ENCODE measurements at regions of chrX and their contacts with region 1.

Region 1: DNA sequence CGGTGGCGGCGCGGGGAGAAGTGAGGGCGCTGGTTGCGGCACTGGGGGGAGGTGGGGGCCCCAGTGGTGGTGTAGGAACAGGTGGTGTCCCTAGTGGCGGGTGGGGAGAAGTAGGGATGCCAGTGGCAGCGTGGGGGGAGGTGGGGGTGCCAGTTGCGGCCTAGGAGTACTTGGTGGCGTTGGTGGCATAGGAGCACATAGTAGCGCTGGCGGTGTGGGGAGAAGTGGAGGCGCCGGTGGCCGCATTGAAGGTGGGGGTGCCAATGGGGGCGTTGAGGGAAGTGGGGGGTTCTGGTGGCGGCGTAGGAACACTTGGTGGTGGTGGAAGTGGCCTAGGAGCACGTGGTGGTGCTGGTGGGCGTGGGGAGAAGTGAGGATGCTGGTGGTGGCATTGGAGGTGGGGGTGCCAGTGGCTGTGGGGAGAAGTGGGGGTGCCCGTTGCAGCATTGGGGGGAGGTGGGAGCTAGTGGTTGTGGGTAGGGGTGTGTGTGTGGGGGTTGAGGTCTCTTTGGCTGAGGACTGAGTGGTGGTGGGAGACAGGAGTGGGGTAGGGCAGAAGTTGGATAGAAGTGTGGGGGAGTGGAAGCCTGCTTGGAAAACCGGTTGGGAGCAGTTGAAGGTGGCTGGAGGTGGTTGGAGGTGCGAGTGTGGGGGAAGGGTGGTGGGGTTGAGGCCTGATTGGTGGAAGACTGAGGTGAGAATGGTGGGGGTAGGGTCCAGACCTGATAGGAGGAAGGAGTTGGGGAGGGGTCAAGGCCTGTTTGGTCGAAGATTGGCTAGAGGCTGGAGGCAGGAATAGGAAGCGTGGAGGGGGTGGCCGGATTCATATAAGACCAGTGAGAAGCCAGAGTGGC is 1.1 kb downstream of the GCNA start:
- DNase-seq: no peak
- ATAC-seq: no peak
- H3K4me3 ChIP-seq: no peak overlapping the region
- H3K27ac ChIP-seq: no peak overlapping the region
- H3K4me1 ChIP-seq: no peaks in the 10 kb centered on the region
- H3K27me3 ChIP-seq: no peaks in the 10 kb centered on the region
- CTCF ChIP-seq: no peak

Region 2: DNA sequence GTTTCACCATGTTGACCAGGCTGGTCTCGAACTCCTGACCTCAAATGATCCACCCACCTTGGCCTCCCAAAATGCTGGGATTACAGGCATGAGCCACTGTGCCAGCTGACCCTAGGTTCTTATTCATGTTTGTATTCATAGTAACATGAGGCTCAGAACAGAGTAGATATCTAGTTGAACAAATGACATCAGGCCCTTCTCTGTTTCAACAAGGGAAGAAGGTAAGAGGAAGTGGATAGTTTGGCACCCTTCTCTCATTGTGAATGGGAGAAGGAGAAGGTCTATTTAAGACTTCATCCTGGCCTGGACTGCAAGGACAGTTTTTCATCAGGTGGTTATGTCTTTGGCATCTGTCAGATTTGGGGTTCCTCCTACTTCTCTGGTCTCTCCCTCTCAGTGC is 342.5 kb before region 1 on chrX:
- intact Hi-C with region 1: no loop called
- DNase-seq: no peak
- ATAC-seq: no peak
- H3K4me3 ChIP-seq: no peak overlapping the region
- H3K27ac ChIP-seq: no peak overlapping the region
- H3K4me1 ChIP-seq: no peaks in the 10 kb centered on the region
- H3K27me3 ChIP-seq: no peaks in the 10 kb centered on the region
- CTCF ChIP-seq: no peak

Region 3: GRCh38 chrX:71378732-71379131 is 200.6 kb before region 1 on chrX:
- intact Hi-C with region 1: loop called (anchors 10 kb)
- DNase-seq: no peak
- ATAC-seq: no peak
- H3K4me3 ChIP-seq: no peak overlapping the region
- H3K27ac ChIP-seq: no peak overlapping the region
- H3K4me1 ChIP-seq: no peaks in the 10 kb centered on the region
- H3K27me3 ChIP-seq: no peaks in the 10 kb centered on the region
- CTCF ChIP-seq: no peak

Measured in upper lobe of right lung (tissue), 1 donor.